ENCODE measurements at regions of chr9 and their contacts with region 1.

Region 1: DNA sequence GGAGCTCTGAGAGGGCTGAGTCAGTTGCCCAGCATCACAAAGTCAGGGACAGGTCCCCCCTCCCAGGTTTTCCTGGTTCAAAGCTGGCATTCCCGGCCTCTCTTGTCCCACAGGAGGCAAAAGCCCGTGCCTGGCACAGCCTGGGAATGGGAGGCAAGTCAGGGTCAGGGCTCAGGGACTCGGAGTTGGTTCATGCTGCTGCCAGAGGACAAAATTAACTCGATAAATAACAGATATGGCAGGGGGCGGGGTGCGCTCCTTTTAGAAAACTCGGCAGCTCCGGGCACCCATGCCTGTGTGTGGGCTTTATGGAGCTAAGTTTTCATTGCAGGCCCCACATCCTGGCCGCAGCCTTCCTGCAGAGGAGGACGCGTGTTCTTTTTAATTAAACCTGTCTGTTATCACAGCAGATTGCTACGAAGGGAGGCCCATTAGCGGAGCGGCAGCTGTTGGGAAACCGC is 62.8 kb upstream of the LMX1B start:
- DNase-seq: peak; percentile 70
- H3K4me3 ChIP-seq: no peak overlapping the region
- H3K27ac ChIP-seq: peak overlapping the region in 1 of 2 experiments; percentile 97; a peak in 2 of 4 replicates
- H3K4me1 ChIP-seq: peaks cover 0 to 51% of the 10 kb centered on the region in 2 experiments; a peak in 2 of 4 replicates
- H3K27me3 ChIP-seq: no peaks in the 10 kb centered on the region; the same call in 1 of the 2 replicates
- CTCF ChIP-seq: no peak
- EP300 ChIP-seq: peak in 1 of 2 experiments; percentile 78; a peak in 2 of 4 replicates
- RAD21 ChIP-seq: no peak

Region 2: GRCh38 chr9:126506361-126506941 is 44.5 kb before region 1 on chr9:
- CTCF ChIA-PET with region 1: interaction called, 739 read pairs
- POLR2A ChIA-PET with region 1: interaction called, 35 read pairs
- DNase-seq: no peak
- H3K4me3 ChIP-seq: no peak overlapping the region
- H3K27ac ChIP-seq: peak overlapping the region in 1 of 2 experiments; percentile 28; a peak in 1 of 4 replicates
- H3K4me1 ChIP-seq: peaks cover 0 to 45% of the 10 kb centered on the region in 2 experiments; a peak in 1 of 4 replicates
- H3K27me3 ChIP-seq: no peaks in the 10 kb centered on the region
- CTCF ChIP-seq: no peak
- EP300 ChIP-seq: no peak
- RAD21 ChIP-seq: no peak

Region 3: DNA sequence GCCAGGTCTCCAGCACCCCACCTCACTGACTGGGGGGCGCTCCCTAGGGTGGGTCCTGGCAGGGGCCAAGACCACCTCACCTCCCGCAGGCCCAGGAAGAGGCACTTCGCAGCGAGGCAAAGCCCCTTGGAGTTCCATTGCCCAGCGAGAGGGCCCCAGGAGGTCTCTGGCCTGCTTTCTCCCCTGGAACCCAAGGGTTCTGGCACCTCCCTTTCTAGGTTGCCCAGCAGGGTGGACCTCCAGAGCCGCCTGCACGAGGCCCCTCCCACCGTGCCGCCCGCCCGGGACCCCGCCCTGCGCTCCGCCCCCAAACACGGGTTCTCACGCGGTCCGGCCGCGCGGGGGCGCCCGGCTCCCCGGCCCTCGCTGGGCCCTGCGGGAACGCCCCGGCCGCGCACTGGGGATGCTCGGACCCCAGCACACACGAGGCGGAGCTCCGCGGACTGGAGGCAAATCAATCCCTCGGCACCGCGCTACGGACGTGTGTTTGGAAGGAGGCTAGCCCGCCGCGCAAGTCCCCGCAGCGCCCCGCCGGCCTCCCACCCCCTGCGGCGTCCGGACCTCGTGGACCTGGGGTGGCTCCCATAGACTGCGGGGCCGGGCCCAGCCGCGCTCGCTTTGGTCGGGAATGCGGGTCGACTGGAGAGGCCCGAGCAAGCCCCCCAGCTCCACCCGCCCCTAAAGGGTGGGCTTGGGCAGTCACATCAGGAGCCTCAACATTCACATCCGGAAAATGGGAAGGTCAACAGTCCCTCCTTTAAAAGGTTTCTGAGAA is 36.7 kb before region 1 on chr9:
- CTCF ChIA-PET with region 1: interaction called, 473 read pairs
- POLR2A ChIA-PET with region 1: interaction called, 35 read pairs
- DNase-seq: peak; percentile 92
- H3K4me3 ChIP-seq: no peak overlapping the region
- H3K27ac ChIP-seq: peak overlapping the region in 1 of 2 experiments; percentile 54; a peak in 1 of 4 replicates
- H3K4me1 ChIP-seq: peaks cover 0 to 54% of the 10 kb centered on the region in 2 experiments; a peak in 2 of 4 replicates
- H3K27me3 ChIP-seq: no peaks in the 10 kb centered on the region
- CTCF ChIP-seq: peak; percentile 40
- EP300 ChIP-seq: no peak
- RAD21 ChIP-seq: peak; percentile 46

Region 4: DNA sequence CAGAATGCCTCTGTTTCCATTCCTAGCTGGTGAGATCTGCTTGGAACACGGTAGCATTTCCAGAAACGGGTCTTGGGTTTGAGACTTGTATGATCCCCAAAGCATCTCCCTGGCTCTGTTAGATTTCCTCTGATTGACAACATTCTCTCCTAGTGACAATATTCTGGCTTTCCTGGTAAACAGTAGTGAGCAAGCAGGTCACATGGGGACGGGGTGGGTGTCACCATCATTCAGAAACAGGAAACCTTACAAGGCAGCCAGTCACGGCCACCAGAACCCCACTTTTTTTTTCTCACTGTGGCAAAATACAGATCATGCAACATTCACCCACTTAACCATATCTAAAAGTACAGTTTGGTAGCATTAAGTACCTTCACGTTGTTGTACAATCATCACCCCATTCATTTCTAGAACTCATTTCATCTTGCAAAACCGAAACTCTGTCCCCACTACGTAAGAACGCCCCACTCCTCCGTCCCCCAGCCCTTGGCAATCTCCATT is 27.3 kb before region 1 on chr9:
- CTCF ChIA-PET with region 1: interaction called, 473 read pairs
- POLR2A ChIA-PET with region 1: interaction called, 16 read pairs
- DNase-seq: peak; percentile 24
- H3K4me3 ChIP-seq: no peak overlapping the region
- H3K27ac ChIP-seq: peak overlapping the region in 1 of 2 experiments; percentile 55; a peak in 2 of 4 replicates
- H3K4me1 ChIP-seq: peaks cover 0 to 73% of the 10 kb centered on the region in 2 experiments; a peak in 2 of 4 replicates
- H3K27me3 ChIP-seq: peaks cover 19% of the 10 kb centered on the region; the same call in 1 of the 2 replicates
- CTCF ChIP-seq: no peak
- EP300 ChIP-seq: no peak
- RAD21 ChIP-seq: no peak